ENCODE measurements at regions of chr7 and their contacts with region 1.

Region 1: GRCh38 chr7:18290223-18290622 is 205.3 kb upstream of the HDAC9 start:
- DNase-seq: no peak
- ATAC-seq: peak in 3 of 8 donors; percentile 27 to 60 (median 33)
- H3K4me3 ChIP-seq: peak overlapping the region in 7 of 10 donors; percentile 2 to 35 (median 24)
- H3K27ac ChIP-seq: peak overlapping the region in 1 of 10 donors; percentile 21
- H3K4me1 ChIP-seq: peaks cover 0 to 53% (median 15%) of the 10 kb centered on the region in 9 donors
- H3K27me3 ChIP-seq: no peaks in the 10 kb centered on the region
- CTCF ChIP-seq: no peak

Region 2: GRCh38 chr7:18119985-18120384 is 170.2 kb before region 1 on chr7:
- intact Hi-C with region 1: loop called in 1 of 10 experiments (anchors 10 kb)
- DNase-seq: no peak
- ATAC-seq: peak in 3 of 8 donors; percentile 48 to 68 (median 61)
- H3K4me3 ChIP-seq: no peak overlapping the region
- H3K27ac ChIP-seq: no peak overlapping the region
- H3K4me1 ChIP-seq: peaks cover 0 to 5% (median 0%) of the 10 kb centered on the region in 9 donors
- H3K27me3 ChIP-seq: no peaks in the 10 kb centered on the region
- CTCF ChIP-seq: peak in 6 of 9 donors; percentile 10 to 48 (median 34)

Region 3: DNA sequence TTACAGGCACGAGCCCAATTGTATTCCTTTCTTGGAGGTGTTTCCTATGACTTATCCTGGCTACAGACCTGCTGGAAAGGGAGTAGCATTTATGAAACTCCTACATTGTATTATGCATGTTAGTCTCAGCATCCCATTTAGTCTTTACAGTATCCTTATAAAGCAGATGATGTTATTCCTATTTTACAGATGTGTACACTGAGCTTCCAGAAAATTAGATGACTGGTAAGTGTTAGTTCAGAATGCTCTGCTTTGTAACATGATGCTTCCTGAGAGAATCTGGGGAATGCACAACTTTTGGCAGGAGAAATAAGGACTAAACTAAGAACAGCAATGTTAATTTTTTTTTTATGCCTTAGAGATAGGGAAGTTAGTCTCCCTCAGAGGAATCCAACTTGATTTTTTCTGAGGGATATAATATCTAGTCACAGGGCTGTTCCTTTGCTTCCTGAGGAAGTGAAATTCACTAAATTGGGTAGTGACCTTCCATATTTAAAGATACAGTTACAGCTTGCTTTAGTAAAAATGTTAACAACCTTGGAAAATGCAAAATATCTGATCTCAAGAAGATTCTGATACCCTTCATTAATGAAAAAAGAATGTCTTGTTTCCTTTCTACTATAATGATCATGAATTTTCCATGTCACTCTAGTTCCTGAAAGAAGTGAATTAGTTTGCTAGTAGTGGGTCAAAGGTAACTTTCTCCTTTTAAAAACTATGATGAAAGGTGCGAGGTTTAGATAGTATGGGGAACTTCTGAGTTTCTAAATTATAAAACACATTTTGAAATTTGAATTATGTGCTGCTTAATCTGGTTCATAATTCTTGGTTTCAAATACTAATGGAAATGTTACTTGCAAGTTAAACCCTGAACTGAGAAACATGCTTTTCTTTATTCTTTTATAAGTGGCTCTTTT is 68.6 kb before region 1 on chr7:
- intact Hi-C with region 1: loop called in 1 of 10 experiments (anchors 10 kb)
- DNase-seq: no peak
- ATAC-seq: peak in 6 of 8 donors; percentile 42 to 63 (median 52)
- H3K4me3 ChIP-seq: no peak overlapping the region
- H3K27ac ChIP-seq: peak overlapping the region in 2 of 10 donors; percentile 17 to 43
- H3K4me1 ChIP-seq: peaks cover 0 to 67% (median 17%) of the 10 kb centered on the region in 9 donors
- H3K27me3 ChIP-seq: no peaks in the 10 kb centered on the region
- CTCF ChIP-seq: no peak

Measured in heart right ventricle (tissue), 16 donors.